ENCODE measurements at regions of chr1 and their contacts with region 1.

Region 1: DNA sequence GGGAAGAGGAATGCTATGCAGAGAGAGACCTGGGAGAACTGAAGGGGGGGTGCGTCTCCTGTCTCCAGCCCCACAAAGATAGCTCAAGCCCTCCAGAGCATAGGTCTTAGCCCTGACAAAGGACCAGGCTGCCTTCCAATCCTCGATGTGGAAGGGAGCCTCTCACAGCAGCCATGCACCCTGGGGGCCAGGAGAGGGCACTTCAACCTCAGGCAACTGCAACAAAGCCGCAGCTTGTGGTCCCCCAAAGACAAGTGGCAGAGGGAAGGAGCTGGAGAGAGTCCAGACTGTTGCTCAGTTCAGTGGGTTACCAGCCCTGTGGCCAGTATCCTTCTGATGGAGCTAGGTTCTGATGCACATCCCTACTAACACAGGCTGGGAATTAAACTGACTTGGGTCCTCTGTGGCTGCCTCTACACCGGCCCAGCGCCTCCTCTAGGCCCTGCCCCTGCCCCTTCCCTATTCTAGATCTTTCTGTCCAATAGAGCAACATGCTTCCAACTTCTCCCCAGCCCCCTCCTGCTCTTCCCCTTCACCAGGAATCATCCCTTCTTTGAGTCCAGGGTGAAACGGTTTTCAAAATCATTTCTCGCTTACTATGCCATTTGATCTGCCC is 100.8 kb upstream of the SPATA6 start:
- DNase-seq: peak; percentile 80
- H3K4me3 ChIP-seq: peak overlapping the region in 1 of 2 experiments; percentile 46; a peak in 1 of 4 replicates
- H3K27ac ChIP-seq: no peak overlapping the region
- H3K4me1 ChIP-seq: peaks cover 0 to 4% of the 10 kb centered on the region in 2 experiments; a peak in 1 of 4 replicates
- H3K27me3 ChIP-seq: no peaks in the 10 kb centered on the region
- CTCF ChIP-seq: peak; percentile 78
- EP300 ChIP-seq: no peak
- RAD21 ChIP-seq: peak; percentile 100

Region 2: GRCh38 chr1:48591181-48591580 is 18.4 kb after region 1 on chr1:
- CTCF ChIA-PET with region 1: interaction called, 12 read pairs
- POLR2A ChIA-PET with region 1: no interaction called
- DNase-seq: no peak
- H3K4me3 ChIP-seq: no peak overlapping the region
- H3K27ac ChIP-seq: no peak overlapping the region
- H3K4me1 ChIP-seq: peaks cover 0 to 3% of the 10 kb centered on the region in 2 experiments; a peak in 1 of 4 replicates
- H3K27me3 ChIP-seq: no peaks in the 10 kb centered on the region
- CTCF ChIP-seq: no peak
- EP300 ChIP-seq: no peak
- RAD21 ChIP-seq: no peak

Region 3: GRCh38 chr1:48697066-48697707 is 124.4 kb after region 1 on chr1:
- CTCF ChIA-PET with region 1: interaction called, 97 read pairs
- POLR2A ChIA-PET with region 1: no interaction called
- DNase-seq: peak; percentile 68
- H3K4me3 ChIP-seq: no peak overlapping the region
- H3K27ac ChIP-seq: no peak overlapping the region
- H3K4me1 ChIP-seq: no peaks in the 10 kb centered on the region; a peak in 1 of 4 replicates
- H3K27me3 ChIP-seq: peaks cover 1% of the 10 kb centered on the region; the same call in 1 of the 2 replicates
- CTCF ChIP-seq: peak; percentile 94
- EP300 ChIP-seq: no peak
- RAD21 ChIP-seq: peak; percentile 76

Region 4: GRCh38 chr1:48750109-48750508 is 177.4 kb after region 1 on chr1:
- CTCF ChIA-PET with region 1: no interaction called
- POLR2A ChIA-PET with region 1: no interaction called
- DNase-seq: no peak
- H3K4me3 ChIP-seq: no peak overlapping the region
- H3K27ac ChIP-seq: no peak overlapping the region
- H3K4me1 ChIP-seq: no peaks in the 10 kb centered on the region
- H3K27me3 ChIP-seq: no peaks in the 10 kb centered on the region
- CTCF ChIP-seq: no peak
- EP300 ChIP-seq: no peak
- RAD21 ChIP-seq: no peak

Region 5: GRCh38 chr1:48817505-48818114 is 244.9 kb after region 1 on chr1:
- CTCF ChIA-PET with region 1: interaction called, 34 read pairs
- POLR2A ChIA-PET with region 1: no interaction called
- DNase-seq: peak; percentile 51
- H3K4me3 ChIP-seq: no peak overlapping the region; a peak in 1 of 4 replicates
- H3K27ac ChIP-seq: no peak overlapping the region
- H3K4me1 ChIP-seq: peaks cover 0 to 2% of the 10 kb centered on the region in 2 experiments; a peak in 2 of 4 replicates
- H3K27me3 ChIP-seq: no peaks in the 10 kb centered on the region
- CTCF ChIP-seq: peak; percentile 78
- EP300 ChIP-seq: no peak
- RAD21 ChIP-seq: peak; percentile 91

Region 6: DNA sequence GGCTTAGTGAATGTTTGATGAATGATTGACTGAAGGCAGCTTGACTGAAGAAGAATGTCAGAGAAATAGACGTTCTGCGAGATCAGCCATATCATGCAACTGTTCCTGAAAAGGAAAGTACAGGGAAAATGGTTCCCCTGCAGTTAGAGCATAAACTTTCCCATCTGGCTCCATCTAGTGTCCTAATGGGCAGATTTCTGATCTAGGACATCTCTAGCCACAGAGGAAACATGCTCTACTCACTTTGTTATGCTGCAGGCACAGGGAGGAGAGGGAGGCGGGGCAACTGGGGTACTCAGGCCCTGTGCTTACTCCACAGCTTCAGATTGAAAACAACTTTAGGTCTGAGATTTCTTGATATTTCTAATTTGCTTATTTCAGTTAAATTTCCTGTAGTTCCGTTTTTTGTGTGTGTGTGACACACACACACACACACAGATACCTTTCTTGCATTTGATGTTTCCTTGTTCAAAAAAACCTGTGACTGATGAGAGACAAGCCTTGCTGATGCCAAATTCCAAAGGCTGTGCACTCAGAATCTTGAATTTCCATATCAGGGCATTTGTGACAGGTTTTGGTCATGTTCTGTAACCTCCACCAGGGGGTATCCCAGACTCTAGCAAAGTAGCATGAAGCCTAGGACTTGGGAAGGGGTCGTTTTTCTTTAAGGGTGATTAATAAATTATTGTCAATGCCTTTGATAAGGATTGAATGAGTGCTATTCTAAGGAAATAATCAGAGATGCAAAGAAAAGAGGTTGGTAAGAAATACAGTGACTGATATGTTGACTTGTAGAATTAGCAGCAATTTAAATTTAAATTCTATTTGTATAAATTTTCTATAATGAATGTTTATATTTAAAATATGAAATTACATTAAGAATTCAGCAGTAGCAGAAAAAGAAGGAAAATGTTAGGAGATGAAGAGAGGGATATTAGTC is 343.6 kb after region 1 on chr1:
- CTCF ChIA-PET with region 1: interaction called, 20 read pairs
- POLR2A ChIA-PET with region 1: no interaction called
- DNase-seq: peak; percentile 63
- H3K4me3 ChIP-seq: peak overlapping the region in 1 of 2 experiments; percentile 20; a peak in 1 of 4 replicates
- H3K27ac ChIP-seq: peak overlapping the region; percentile 78 to 98
- H3K4me1 ChIP-seq: peaks cover 13 to 31% of the 10 kb centered on the region in 2 experiments
- H3K27me3 ChIP-seq: no peaks in the 10 kb centered on the region
- CTCF ChIP-seq: peak; percentile 74
- EP300 ChIP-seq: no peak
- RAD21 ChIP-seq: peak; percentile 91

Region 7: DNA sequence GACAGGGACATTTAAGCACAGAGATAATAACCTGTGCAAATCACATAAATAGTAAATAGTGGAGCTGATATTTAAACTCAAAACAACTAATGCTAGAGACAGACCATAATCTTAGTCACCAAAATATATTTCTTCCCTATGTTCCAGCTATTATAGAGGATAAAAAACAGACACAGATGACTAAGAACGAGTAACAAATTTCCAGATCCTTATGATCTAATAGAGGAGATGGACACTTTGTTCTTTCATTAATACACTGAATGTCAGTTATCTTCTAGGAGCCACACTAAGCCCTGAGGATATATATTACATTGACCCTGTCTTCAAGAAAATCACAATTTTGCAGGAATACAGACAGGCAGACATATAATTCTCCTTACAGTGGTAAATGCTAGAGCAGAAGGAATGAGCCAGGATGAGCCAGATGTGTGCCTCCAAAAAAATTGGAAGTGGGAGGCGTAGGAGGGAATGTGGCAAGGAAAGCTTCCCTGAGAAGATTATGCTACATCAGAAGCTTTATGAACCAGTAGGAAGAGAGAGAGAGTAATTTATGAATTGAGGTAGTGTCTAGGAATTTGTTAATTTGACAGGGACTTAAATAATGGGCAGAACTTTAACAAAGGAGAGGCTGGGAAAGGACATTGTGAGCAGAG is 599.3 kb after region 1 on chr1:
- CTCF ChIA-PET with region 1: no interaction called
- POLR2A ChIA-PET with region 1: no interaction called
- DNase-seq: no peak
- H3K4me3 ChIP-seq: no peak overlapping the region
- H3K27ac ChIP-seq: peak overlapping the region in 1 of 2 experiments; percentile 11; a peak in 1 of 4 replicates
- H3K4me1 ChIP-seq: no peaks in the 10 kb centered on the region
- H3K27me3 ChIP-seq: no peaks in the 10 kb centered on the region
- CTCF ChIP-seq: no peak
- EP300 ChIP-seq: peak in 1 of 2 experiments; percentile 14; a peak in 1 of 4 replicates
- RAD21 ChIP-seq: no peak